Activated naive CD4-positive, alpha-beta T cell treated with anti-CD3 and anti-CD28 coated beads for 36 hours (primary cell): ENCODE measurements at regions of chr9 and their contacts with region 1.

Region 1: GRCh38 chr9:38417003-38417945 is 7.0 kb downstream of the IGFBPL1 start:
- DNase-seq: peak; percentile 73
- H3K4me3 Mint-ChIP-seq: no peak overlapping the region
- H3K27ac Mint-ChIP-seq: no peak overlapping the region
- H3K4me1 Mint-ChIP-seq: no peaks in the 10 kb centered on the region
- H3K27me3 Mint-ChIP-seq: peaks cover 1% of the 10 kb centered on the region

Region 2: GRCh38 chr9:37324261-37324683 is 1093.0 kb before region 1 on chr9:
- CTCF ChIA-PET with region 1: no interaction called
- intact Hi-C with region 1: no loop called
- DNase-seq: no peak
- H3K4me3 Mint-ChIP-seq: no peak overlapping the region
- H3K27ac Mint-ChIP-seq: no peak overlapping the region
- H3K4me1 Mint-ChIP-seq: peaks cover 7% of the 10 kb centered on the region
- H3K27me3 Mint-ChIP-seq: no peaks in the 10 kb centered on the region

Region 3: DNA sequence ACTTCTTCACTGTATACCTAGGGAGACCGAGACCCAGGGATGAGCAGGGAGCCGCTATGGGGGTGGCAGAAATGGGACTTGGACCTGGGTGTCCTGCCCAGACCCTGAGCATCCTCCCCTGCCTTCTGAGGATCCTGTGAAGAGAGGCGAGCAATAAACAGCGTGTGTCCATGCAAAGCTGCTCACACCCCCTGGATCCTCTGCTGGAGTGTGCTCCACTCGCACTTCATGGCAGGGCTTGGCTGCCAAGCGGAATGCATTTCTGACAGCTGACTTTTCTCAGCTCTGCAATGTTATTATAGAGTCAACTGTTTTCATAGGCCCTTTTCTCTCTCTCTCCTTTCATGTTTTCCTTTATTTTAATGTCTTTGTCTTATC is 55.8 kb before region 1 on chr9:
- CTCF ChIA-PET with region 1: no interaction called
- intact Hi-C with region 1: no loop called
- DNase-seq: no peak
- H3K4me3 Mint-ChIP-seq: no peak overlapping the region
- H3K27ac Mint-ChIP-seq: no peak overlapping the region
- H3K4me1 Mint-ChIP-seq: peaks cover 5% of the 10 kb centered on the region
- H3K27me3 Mint-ChIP-seq: peaks cover 2% of the 10 kb centered on the region

Region 4: GRCh38 chr9:38671748-38672147 is 254.5 kb after region 1 on chr9:
- CTCF ChIA-PET with region 1: no interaction called
- intact Hi-C with region 1: loop called (anchors 10 kb)
- DNase-seq: no peak
- H3K4me3 Mint-ChIP-seq: no peak overlapping the region
- H3K27ac Mint-ChIP-seq: no peak overlapping the region
- H3K4me1 Mint-ChIP-seq: peaks cover 3% of the 10 kb centered on the region
- H3K27me3 Mint-ChIP-seq: no peaks in the 10 kb centered on the region